AG04450 (cell line): ENCODE measurements at regions of chr17 and their contacts with region 1.

Region 1: GRCh38 chr17:19744922-19745757 is 3.0 kb downstream of the ALDH3A1 start:
- DNase-seq: no peak
- H3K4me3 ChIP-seq: peak overlapping the region; percentile 35
- H3K27ac ChIP-seq: no peak overlapping the region
- H3K27me3 ChIP-seq: peaks cover 32% of the 10 kb centered on the region
- CTCF ChIP-seq: peak; percentile 79

Region 2: DNA sequence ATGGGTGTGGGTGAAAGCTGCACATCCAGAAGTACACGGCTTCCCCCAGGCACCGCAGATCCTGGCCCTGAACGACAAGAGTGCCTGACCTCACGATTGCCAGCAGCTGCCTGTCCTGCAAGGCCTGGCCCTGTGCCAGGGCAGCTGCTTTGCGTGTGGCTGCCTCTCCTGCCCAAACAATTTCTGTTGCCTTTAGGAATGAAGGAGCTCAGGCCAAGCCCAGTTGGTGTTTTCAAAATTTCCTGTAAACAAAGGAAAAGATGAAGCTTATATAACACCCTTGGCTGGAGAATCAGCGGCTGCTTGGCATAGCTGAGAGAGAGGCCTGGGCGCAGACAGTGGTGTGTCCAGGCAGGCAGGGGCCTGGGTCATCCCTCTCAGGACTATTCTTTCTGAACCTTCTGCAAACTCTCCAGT is 17.1 kb before region 1 on chr17:
- CTCF ChIA-PET with region 1: interaction called, 22 read pairs
- POLR2A ChIA-PET with region 1: no interaction called
- DNase-seq: peak; percentile 67
- H3K4me3 ChIP-seq: no peak overlapping the region
- H3K27ac ChIP-seq: peak overlapping the region; percentile 77
- H3K27me3 ChIP-seq: peaks cover 11% of the 10 kb centered on the region
- CTCF ChIP-seq: no peak